ENCODE measurements at regions of chr3 and their contacts with region 1.

Region 1: DNA sequence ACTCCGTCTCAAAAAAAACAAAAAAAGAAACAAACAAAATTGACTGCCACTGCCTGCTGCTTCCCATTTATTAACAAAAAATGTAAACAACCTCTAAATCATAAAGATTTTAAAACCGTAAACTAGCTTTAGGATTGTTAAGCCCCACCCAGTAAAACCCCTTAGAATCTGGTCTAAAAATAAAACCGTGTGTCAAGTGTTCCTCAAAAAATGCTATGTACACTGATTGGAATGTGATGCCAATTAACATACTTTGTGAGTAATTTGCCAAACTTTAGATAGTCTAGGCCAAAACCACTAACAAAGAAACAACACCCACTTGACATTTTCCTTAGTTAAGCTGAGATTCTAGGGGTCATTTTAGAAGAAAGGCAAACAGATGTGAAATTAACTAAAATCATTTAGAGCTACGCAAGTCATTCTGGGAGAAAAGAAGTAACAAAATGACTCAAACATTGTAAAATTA is 5.3 kb downstream of the RAF1 start:
- DNase-seq: no peak
- ATAC-seq: no peak
- H3K4me3 ChIP-seq: no peak overlapping the region; the same call in 1 of the 2 replicates
- H3K27ac ChIP-seq: peak overlapping the region; percentile 42
- H3K4me1 ChIP-seq: peaks cover 14% of the 10 kb centered on the region
- H3K27me3 ChIP-seq: no peaks in the 10 kb centered on the region
- CTCF ChIP-seq: no peak
- EP300 ChIP-seq: 0 out of 4 replicates have a peak, but pooled peaks of 1 of the 2 experiments have one; percentile 12
- POLR2A ChIP-seq: no peak
- RAD21 ChIP-seq: no peak

Region 2: GRCh38 chr3:12440927-12441326 is 217.7 kb before region 1 on chr3:
- CTCF ChIA-PET with region 1: no interaction called
- POLR2A ChIA-PET with region 1: no interaction called
- RAD21 ChIA-PET with region 1: no interaction called
- SMC1A ChIA-PET with region 1: no interaction called
- in situ Hi-C with region 1: no loop called
- intact Hi-C with region 1: no loop called
- DNase-seq: no peak
- ATAC-seq: no peak
- H3K4me3 ChIP-seq: no peak overlapping the region
- H3K27ac ChIP-seq: no peak overlapping the region
- H3K4me1 ChIP-seq: no peaks in the 10 kb centered on the region
- H3K27me3 ChIP-seq: peaks cover 5 to 10% of the 10 kb centered on the region in 2 experiments; a peak in 3 of 4 replicates
- CTCF ChIP-seq: no peak
- EP300 ChIP-seq: no peak
- POLR2A ChIP-seq: no peak
- RAD21 ChIP-seq: no peak

Region 3: DNA sequence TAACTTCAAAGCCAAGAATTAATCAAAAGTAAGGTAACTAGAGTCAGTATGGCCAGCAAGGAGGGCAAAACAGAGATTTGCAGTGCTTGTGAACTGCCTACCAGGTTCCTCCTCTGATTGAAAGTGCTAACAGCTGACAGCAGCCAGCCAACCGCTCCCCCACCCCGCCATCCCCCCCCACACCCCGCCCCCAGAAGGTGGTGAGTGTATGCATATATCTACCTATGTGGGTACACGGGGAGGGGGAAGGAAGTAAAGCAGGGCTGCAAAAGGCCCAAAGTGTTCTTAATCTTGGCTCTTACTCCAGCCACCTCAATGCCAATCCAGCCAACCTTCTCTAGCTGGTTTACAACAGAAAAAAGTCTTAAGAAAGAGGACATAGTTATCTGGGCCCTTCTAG is 45.4 kb before region 1 on chr3:
- CTCF ChIA-PET with region 1: no interaction called
- POLR2A ChIA-PET with region 1: interaction called, 4 read pairs
- RAD21 ChIA-PET with region 1: interaction called, 8 read pairs
- SMC1A ChIA-PET with region 1: interaction called, 11 read pairs
- in situ Hi-C with region 1: no loop called
- intact Hi-C with region 1: loop called (anchors 5 kb)
- DNase-seq: no peak
- ATAC-seq: no peak
- H3K4me3 ChIP-seq: no peak overlapping the region
- H3K27ac ChIP-seq: no peak overlapping the region
- H3K4me1 ChIP-seq: no peaks in the 10 kb centered on the region
- H3K27me3 ChIP-seq: no peaks in the 10 kb centered on the region
- CTCF ChIP-seq: no peak
- EP300 ChIP-seq: no peak
- POLR2A ChIP-seq: no peak
- RAD21 ChIP-seq: no peak

Region 4: GRCh38 chr3:12648384-12648959 is 10.2 kb before region 1 on chr3:
- CTCF ChIA-PET with region 1: interaction called, 30 read pairs
- POLR2A ChIA-PET with region 1: interaction called, 125 read pairs
- RAD21 ChIA-PET with region 1: interaction called, 72 read pairs
- SMC1A ChIA-PET with region 1: interaction called, 140 read pairs
- in situ Hi-C with region 1: no loop called
- intact Hi-C with region 1: no loop called
- DNase-seq: peak; percentile 85
- ATAC-seq: peak; percentile 82
- H3K4me3 ChIP-seq: peak overlapping the region; percentile 59
- H3K27ac ChIP-seq: peak overlapping the region; percentile 88
- H3K4me1 ChIP-seq: peaks cover 26% of the 10 kb centered on the region
- H3K27me3 ChIP-seq: no peaks in the 10 kb centered on the region
- CTCF ChIP-seq: no peak
- EP300 ChIP-seq: peak in 1 of 2 experiments; percentile 57; a peak in 1 of 4 replicates
- POLR2A ChIP-seq: no peak
- RAD21 ChIP-seq: no peak

Measured in GM12878 (cell line).